ENCODE measurements at regions of chr12 and their contacts with region 1.

Region 1: GRCh38 chr12:53005986-53006809 is at the start of gene EIF4B:
- DNase-seq: peak; percentile 91 to 100 (median 99)
- ATAC-seq: peak; percentile 96
- H3K4me3 ChIP-seq: peak within 1 kb of the TSS; percentile 99
- H3K4me3 Mint-ChIP-seq: peak within 1 kb of the TSS; percentile 96 to 100 (median 99)
- H3K27ac ChIP-seq: peak within 1 kb of the TSS; percentile 86
- H3K27ac Mint-ChIP-seq: peak within 1 kb of the TSS; percentile 96 to 99 (median 98)
- H3K4me1 ChIP-seq: peaks cover 32 to 36% of the 10 kb centered on the region in 2 donors
- H3K4me1 Mint-ChIP-seq: peaks cover 26 to 59% (median 46%) of the 10 kb centered on the region in 7 donors
- H3K27me3 ChIP-seq: no peaks in the 10 kb centered on the region
- H3K27me3 Mint-ChIP-seq: peaks cover 0 to 9% (median 0%) of the 10 kb centered on the region in 5 donors
- total RNA-seq, gene EIF4B: 380 to 919 (median 833) TPM

Region 2: DNA sequence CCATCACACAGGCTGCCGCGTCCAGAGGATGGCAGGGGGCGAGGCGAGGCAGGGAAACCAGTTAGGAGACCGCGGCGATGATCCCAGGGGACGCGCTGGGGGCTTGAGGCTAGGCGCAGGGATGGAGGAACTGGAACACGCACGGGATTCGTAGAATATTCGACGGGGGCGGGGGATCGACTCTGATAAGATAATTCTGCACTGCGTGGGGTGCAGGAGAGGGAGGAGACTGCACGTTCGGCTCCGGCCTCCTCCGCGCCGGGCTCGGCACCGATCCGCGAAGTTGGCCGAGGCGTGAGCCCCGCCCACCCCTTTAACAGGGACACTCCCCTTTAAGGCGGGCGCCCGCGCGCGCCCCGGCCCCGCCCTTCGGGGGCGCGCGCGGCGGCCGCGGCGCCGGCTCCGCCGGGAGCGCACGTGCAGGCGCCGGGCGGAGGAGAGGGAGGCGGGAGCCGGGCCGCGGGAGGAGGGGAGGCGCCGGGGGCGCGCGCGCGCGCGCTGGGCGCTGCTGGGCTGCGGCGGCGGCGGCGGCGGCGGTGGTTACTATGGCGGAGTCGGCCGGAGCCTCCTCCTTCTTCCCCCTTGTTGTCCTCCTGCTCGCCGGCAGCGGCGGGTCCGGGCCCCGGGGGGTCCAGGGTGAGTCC is 1054.9 kb before region 1 on chr12 and contains the start of gene ACVR1B:
- CTCF ChIA-PET with region 1: no interaction called
- POLR2A ChIA-PET with region 1: no interaction called
- intact Hi-C with region 1: loop called in 1 of 2 experiments (anchors 5 kb)
- DNase-seq: peak; percentile 80 to 93 (median 89)
- ATAC-seq: peak; percentile 97
- H3K4me3 ChIP-seq: peak within 1 kb of the TSS; percentile 70
- H3K4me3 Mint-ChIP-seq: peak within 1 kb of the TSS; percentile 87 to 100 (median 97)
- H3K27ac ChIP-seq: peak within 1 kb of the TSS; percentile 88
- H3K27ac Mint-ChIP-seq: peak within 1 kb of the TSS; percentile 79 to 97 (median 94)
- H3K4me1 ChIP-seq: peaks cover 16 to 20% of the 10 kb centered on the region in 2 donors
- H3K4me1 Mint-ChIP-seq: peaks cover 25 to 49% (median 39%) of the 10 kb centered on the region in 7 donors
- H3K27me3 ChIP-seq: no peaks in the 10 kb centered on the region
- H3K27me3 Mint-ChIP-seq: peaks cover 0 to 66% (median 0%) of the 10 kb centered on the region in 5 donors
- total RNA-seq, gene ACVR1B: 4.9 to 14.8 (median 14.2) TPM

Region 3: GRCh38 chr12:52980693-52981423 is 25.3 kb before region 1 on chr12:
- CTCF ChIA-PET with region 1: no interaction called
- POLR2A ChIA-PET with region 1: no interaction called
- intact Hi-C with region 1: loop called in 1 of 2 experiments (anchors 1 kb)
- DNase-seq: peak; percentile 53 to 85 (median 79)
- ATAC-seq: peak; percentile 98
- H3K4me3 ChIP-seq: no peak overlapping the region
- H3K4me3 Mint-ChIP-seq: no peak overlapping the region
- H3K27ac ChIP-seq: no peak overlapping the region
- H3K27ac Mint-ChIP-seq: peak overlapping the region in 1 of 9 donors; percentile 17
- H3K4me1 ChIP-seq: no peaks in the 10 kb centered on the region
- H3K4me1 Mint-ChIP-seq: peaks cover 0 to 7% (median 0%) of the 10 kb centered on the region in 7 donors
- H3K27me3 ChIP-seq: no peaks in the 10 kb centered on the region
- H3K27me3 Mint-ChIP-seq: peaks cover 23 to 44% (median 26%) of the 10 kb centered on the region in 5 donors

Region 4: DNA sequence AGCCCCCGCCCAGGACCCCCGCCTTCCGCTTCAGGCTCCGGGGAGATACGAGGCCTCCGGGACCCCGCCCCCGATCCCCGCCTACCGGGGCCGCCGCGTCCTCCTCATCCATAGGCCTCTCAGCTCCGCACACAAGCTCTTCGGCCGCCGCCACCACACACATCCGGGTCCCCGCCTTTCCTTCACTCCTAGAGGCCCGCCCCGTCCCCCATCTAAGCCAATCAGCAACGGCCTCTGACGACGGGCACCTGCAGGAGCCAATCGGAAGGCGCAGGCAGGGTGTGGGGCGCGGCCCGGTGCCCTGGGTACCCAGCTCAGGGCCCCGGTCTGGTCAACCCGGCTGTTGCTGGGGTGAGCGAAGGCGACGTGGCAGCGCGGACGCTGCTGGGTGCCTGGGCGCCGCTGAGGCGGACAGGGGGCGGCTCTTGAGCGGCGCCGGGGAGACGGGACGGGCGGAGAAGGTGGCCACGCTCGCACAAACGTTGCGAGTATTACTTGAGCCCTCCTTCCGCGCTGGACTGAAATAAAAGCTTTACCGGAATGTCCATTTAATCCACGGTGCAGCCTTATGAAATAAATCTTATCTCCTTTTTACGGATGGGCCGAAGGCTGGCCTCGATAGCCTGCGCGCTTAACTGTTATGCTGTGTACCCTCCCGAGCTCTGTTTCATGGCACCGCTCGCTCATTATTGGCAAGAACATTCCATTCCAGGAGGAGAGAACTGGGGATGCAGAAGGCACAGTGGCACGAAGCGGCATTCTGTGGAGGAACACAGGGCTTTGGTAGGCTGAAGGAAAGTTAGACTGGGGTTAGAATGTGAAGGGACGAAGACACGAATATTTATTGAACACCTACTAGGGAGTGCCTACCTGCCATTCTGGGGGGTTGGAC is 73.3 kb after region 1 on chr12 and contains the start of gene SPRYD3:
- CTCF ChIA-PET with region 1: no interaction called
- POLR2A ChIA-PET with region 1: interaction called, 29 read pairs
- intact Hi-C with region 1: loop called (anchors 1 kb)
- DNase-seq: peak; percentile 96 to 99 (median 97)
- ATAC-seq: peak; percentile 99
- H3K4me3 ChIP-seq: peak within 1 kb of the TSS; percentile 95
- H3K4me3 Mint-ChIP-seq: peak within 1 kb of the TSS; percentile 90 to 98 (median 92)
- H3K27ac ChIP-seq: peak within 1 kb of the TSS; percentile 93
- H3K27ac Mint-ChIP-seq: peak within 1 kb of the TSS; percentile 95 to 98 (median 96)
- H3K4me1 ChIP-seq: peaks cover 10 to 14% of the 10 kb centered on the region in 2 donors
- H3K4me1 Mint-ChIP-seq: peaks cover 26 to 53% (median 40%) of the 10 kb centered on the region in 7 donors
- H3K27me3 ChIP-seq: no peaks in the 10 kb centered on the region
- H3K27me3 Mint-ChIP-seq: peaks cover 0 to 3% (median 0%) of the 10 kb centered on the region in 5 donors
- total RNA-seq, gene SPRYD3: 33.0 to 48.0 (median 36.4) TPM

Region 5: DNA sequence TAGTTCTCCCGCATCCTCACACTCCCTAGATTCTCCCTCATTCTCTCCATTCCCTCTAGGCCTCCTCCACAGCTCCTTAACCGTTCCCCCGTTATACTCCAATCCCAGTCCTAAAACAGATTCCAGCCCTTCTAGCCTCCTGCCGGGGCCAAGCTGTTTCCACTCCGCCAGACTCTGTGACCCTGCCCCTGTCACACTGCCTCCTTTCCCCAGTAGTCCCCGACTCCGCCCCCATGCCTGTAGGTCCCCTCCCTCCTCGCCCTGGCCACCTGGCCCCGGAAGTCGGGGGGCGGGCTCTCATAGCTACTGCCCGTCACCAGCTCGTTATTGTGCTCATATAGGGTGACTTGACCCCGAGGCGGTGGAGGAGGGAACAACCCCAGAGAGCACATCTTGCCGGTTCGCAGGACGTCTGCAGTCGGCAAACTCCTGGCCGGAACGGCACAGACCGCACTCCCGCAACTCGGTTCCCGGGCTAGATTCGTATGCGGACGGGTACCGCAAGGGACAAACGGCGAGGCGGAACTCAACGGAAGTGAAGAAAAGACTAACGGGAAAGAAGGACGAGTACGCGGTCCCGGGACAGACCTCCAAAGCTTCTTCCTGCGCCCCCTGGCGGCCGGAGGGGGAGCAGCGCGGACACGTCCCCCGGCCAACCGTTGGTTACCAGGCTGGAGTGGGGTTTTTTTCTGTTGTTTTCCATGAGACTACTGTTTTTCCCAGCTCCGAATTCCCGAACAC is 315.0 kb after region 1 on chr12 and contains the start of gene AAAS:
- CTCF ChIA-PET with region 1: no interaction called
- POLR2A ChIA-PET with region 1: interaction called, 5 read pairs
- intact Hi-C with region 1: loop called (anchors 1 to 2 kb)
- DNase-seq: peak; percentile 89 to 95 (median 94)
- ATAC-seq: peak; percentile 89
- H3K4me3 ChIP-seq: peak within 1 kb of the TSS; percentile 98
- H3K4me3 Mint-ChIP-seq: peak within 1 kb of the TSS; percentile 94 to 99 (median 96)
- H3K27ac ChIP-seq: peak within 1 kb of the TSS; percentile 73
- H3K27ac Mint-ChIP-seq: peak within 1 kb of the TSS; percentile 94 to 98 (median 94)
- H3K4me1 ChIP-seq: peaks cover 25 to 37% of the 10 kb centered on the region in 2 donors
- H3K4me1 Mint-ChIP-seq: peaks cover 23 to 47% (median 43%) of the 10 kb centered on the region in 7 donors
- H3K27me3 ChIP-seq: no peaks in the 10 kb centered on the region
- H3K27me3 Mint-ChIP-seq: peaks cover 0 to 3% (median 0%) of the 10 kb centered on the region in 5 donors
- total RNA-seq, gene AAAS: 35.4 to 73.5 (median 69.0) TPM

Region 6: GRCh38 chr12:53500776-53501614 is 494.8 kb after region 1 on chr12 and contains the start of gene TARBP2:
- CTCF ChIA-PET with region 1: no interaction called
- POLR2A ChIA-PET with region 1: interaction called, 10 read pairs
- intact Hi-C with region 1: loop called in 1 of 2 experiments (anchors 1 kb)
- DNase-seq: peak; percentile 87 to 99 (median 98)
- ATAC-seq: peak; percentile 87
- H3K4me3 ChIP-seq: peak within 1 kb of the TSS; percentile 84
- H3K4me3 Mint-ChIP-seq: peak within 1 kb of the TSS; percentile 86 to 96 (median 92)
- H3K27ac ChIP-seq: peak within 1 kb of the TSS; percentile 98
- H3K27ac Mint-ChIP-seq: peak within 1 kb of the TSS; percentile 87 to 100 (median 97)
- H3K4me1 ChIP-seq: peaks cover 24 to 27% of the 10 kb centered on the region in 2 donors
- H3K4me1 Mint-ChIP-seq: peaks cover 15 to 56% (median 43%) of the 10 kb centered on the region in 7 donors
- H3K27me3 ChIP-seq: no peaks in the 10 kb centered on the region
- H3K27me3 Mint-ChIP-seq: no peaks in the 10 kb centered on the region
- total RNA-seq, gene TARBP2: 25.1 to 45.2 (median 40.7) TPM

Measured in naive thymus-derived CD4-positive, alpha-beta T cell (primary cell).